MCF 10A (cell line): ENCODE measurements at regions of chr1 and their contacts with region 1.

Region 1: GRCh38 chr1:205907794-205908193 is 35.5 kb downstream of the SLC26A9 start:
- DNase-seq: peak; percentile 86
- H3K4me3 Mint-ChIP-seq: no peak overlapping the region
- H3K27ac Mint-ChIP-seq: peak overlapping the region; percentile 11
- H3K4me1 Mint-ChIP-seq: peaks cover 13% of the 10 kb centered on the region
- H3K27me3 Mint-ChIP-seq: peaks cover 28% of the 10 kb centered on the region
- CTCF ChIP-seq: peak; percentile 93

Region 2: GRCh38 chr1:205783904-205784303 is 123.9 kb before region 1 on chr1:
- CTCF ChIA-PET with region 1: interaction called, 11 read pairs
- POLR2A ChIA-PET with region 1: interaction called, 3 read pairs
- intact Hi-C with region 1: no loop called
- DNase-seq: no peak
- H3K4me3 Mint-ChIP-seq: no peak overlapping the region
- H3K27ac Mint-ChIP-seq: no peak overlapping the region
- H3K4me1 Mint-ChIP-seq: no peaks in the 10 kb centered on the region
- H3K27me3 Mint-ChIP-seq: no peaks in the 10 kb centered on the region
- CTCF ChIP-seq: no peak

Region 3: DNA sequence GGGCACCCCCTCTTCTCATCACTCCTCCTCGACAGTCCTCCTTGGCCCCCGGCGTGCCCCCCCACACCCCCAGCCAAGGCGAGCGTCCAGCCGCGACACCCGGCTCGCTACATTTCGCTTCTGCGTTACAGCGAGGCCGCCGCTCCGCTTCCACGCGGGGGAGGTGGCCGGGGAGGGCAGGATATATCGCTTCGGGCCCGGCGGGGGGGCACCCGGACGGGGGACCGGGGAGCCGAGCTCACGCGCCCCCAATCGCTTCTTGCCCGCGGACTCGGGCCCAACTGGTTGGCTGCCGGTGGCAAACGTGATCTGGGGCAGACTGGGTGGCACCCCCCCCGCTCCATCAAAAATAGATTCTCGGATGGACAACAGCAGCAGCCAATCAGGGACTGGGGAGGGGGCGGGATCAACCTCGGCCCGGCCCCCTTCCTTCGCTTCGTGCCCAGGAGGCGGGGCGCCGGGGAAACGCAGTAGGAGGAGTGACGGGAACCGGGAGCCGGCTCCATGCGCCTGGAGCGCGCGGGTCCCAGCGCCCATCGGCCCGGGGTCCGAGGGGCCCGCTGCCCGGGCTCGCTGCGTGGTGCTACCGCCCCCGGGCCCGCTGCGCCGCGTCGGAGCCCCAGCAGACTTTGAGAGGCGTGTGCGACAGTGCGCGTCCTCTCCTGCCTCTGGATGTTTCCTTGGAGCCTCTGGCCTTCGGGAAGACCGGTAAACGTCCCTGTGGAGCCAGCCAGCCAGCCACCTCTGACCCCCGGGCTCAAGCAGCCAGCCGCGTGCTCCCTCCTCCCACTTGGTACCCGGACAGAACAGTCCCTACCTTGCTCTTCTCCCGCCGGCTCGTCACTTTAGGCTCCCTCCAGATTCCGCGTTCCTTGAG is 94.7 kb before region 1 on chr1 and contains the start of gene SLC41A1:
- CTCF ChIA-PET with region 1: interaction called, 12 read pairs
- POLR2A ChIA-PET with region 1: interaction called, 3 read pairs
- intact Hi-C with region 1: loop called (anchors 1 kb)
- DNase-seq: peak; percentile 98
- H3K4me3 Mint-ChIP-seq: peak within 1 kb of the TSS; percentile 87
- H3K27ac Mint-ChIP-seq: peak within 1 kb of the TSS; percentile 40
- H3K4me1 Mint-ChIP-seq: peaks cover 42% of the 10 kb centered on the region
- H3K27me3 Mint-ChIP-seq: no peaks in the 10 kb centered on the region
- CTCF ChIP-seq: no peak
- total RNA-seq, gene SLC41A1: 48.8 and 49.7 TPM in 2 replicates

Region 4: DNA sequence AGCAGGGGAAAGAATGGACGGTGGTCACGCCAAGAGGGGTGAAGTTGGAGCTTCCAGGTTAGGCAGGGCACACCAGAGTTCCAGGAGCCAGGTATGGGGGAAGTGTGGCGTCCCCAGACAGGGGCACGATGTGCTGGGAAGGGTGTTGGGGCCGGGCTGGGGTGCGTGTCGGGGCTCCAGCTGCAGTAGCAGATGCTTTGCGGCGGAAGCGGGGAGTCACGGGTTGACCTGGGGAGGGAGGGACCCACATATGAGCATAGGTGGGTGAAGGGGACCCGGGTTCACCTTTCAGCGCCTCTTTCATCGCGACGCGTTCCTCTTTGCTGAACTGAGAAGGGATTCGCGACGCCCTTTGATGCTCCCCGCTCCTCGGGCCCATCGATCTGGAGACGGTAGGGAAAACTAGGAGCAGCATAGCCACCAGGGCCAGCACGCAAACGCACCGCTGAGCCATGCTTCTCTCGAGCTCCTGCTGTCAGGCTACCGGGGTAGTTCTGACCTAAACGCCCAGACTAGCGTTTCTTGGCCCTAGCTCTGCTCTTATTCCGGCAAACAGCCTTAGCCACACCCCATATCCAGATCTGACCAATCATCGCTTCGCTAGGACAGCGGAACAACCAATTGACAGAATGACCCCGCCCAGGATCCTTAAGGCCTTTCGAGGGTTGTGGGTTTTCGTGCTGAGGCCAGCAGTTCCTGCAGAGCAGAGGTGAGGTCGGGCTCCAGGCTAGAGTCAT is 58.0 kb before region 1 on chr1 and contains the start of gene PM20D1:
- CTCF ChIA-PET with region 1: no interaction called
- POLR2A ChIA-PET with region 1: no interaction called
- intact Hi-C with region 1: loop called (anchors 10 kb)
- DNase-seq: no peak
- H3K4me3 Mint-ChIP-seq: no peak within 1 kb of the TSS
- H3K27ac Mint-ChIP-seq: no peak within 1 kb of the TSS
- H3K4me1 Mint-ChIP-seq: no peaks in the 10 kb centered on the region
- H3K27me3 Mint-ChIP-seq: peaks cover 10% of the 10 kb centered on the region
- CTCF ChIP-seq: no peak
- total RNA-seq, gene PM20D1: not detected in 2 replicates

Region 5: DNA sequence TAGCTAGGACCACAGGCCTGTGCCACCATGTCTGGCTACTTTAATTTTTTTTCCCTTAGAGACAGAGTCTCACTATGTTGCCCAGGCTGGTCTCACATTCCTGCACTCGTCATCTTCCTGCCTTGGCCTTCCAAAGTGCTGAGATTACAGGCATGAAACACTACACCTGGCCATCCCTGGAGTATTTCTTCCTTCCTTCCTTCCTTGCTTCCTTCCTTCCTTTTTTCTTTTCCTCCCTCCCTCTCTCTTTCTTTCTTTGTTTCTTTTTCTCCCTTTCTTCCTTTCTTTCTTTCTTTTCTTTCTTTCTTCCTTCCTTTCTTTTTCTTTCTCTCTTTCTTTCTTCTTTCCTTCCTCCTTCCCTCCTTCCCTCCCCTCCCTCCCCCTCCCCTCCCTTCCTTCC is 11.5 kb before region 1 on chr1:
- CTCF ChIA-PET with region 1: interaction called, 14 read pairs
- POLR2A ChIA-PET with region 1: interaction called, 4 read pairs
- intact Hi-C with region 1: no loop called
- DNase-seq: no peak
- H3K4me3 Mint-ChIP-seq: no peak overlapping the region
- H3K27ac Mint-ChIP-seq: no peak overlapping the region
- H3K4me1 Mint-ChIP-seq: no peaks in the 10 kb centered on the region
- H3K27me3 Mint-ChIP-seq: peaks cover 14% of the 10 kb centered on the region
- CTCF ChIP-seq: no peak

Region 6: GRCh38 chr1:205967555-205968335 is 60.0 kb after region 1 on chr1:
- CTCF ChIA-PET with region 1: interaction called, 12 read pairs
- POLR2A ChIA-PET with region 1: no interaction called
- intact Hi-C with region 1: no loop called
- DNase-seq: peak; percentile 67
- H3K4me3 Mint-ChIP-seq: no peak overlapping the region
- H3K27ac Mint-ChIP-seq: no peak overlapping the region
- H3K4me1 Mint-ChIP-seq: peaks cover 29% of the 10 kb centered on the region
- H3K27me3 Mint-ChIP-seq: peaks cover 5% of the 10 kb centered on the region
- CTCF ChIP-seq: no peak